Activated CD4-positive, alpha-beta T cell treated with anti-CD3 and anti-CD28 coated beads for 36 hours (primary cell): ENCODE measurements at regions of chr3 and their contacts with region 1.

Region 1: GRCh38 chr3:123986427-123986826 is 5.5 kb downstream of the ROPN1 start:
- DNase-seq: no peak
- ATAC-seq: no peak
- H3K4me3 Mint-ChIP-seq: no peak overlapping the region
- H3K27ac Mint-ChIP-seq: no peak overlapping the region
- H3K4me1 Mint-ChIP-seq: no peaks in the 10 kb centered on the region
- H3K27me3 Mint-ChIP-seq: peaks cover 48% of the 10 kb centered on the region

Region 2: DNA sequence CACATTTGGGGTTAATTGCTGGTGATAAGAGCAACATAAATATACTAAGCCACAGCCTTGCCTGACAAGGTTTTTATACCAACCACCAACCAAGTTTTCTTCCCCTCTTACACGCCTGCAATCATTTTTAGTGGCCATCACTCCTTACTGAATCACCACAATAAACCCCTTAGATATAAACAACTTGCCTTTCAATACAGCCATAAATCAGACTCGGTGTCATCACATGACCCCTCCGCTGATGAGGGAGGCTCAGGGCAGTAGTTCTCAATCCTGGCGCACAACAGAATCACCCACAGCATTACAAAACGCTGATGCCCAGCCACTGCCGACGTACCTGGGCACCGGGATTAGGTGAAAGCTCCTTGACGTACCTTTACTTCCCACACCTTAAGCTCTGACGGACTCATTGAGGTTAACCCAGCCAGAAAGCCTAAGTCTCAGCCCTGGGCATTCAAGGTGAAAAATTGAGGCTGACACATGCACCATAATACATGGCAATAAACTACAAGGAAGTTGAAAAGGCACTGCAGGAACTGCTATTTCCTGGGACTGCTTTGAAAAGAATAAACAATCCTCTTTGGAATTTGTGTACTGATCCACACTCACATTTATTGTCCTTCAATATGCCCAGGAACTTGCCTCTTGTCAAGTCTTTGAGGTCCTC is 554.6 kb before region 1 on chr3:
- CTCF ChIA-PET with region 1: no interaction called
- POLR2A ChIA-PET with region 1: no interaction called
- intact Hi-C with region 1: no loop called
- DNase-seq: no peak
- ATAC-seq: no peak
- H3K4me3 Mint-ChIP-seq: no peak overlapping the region
- H3K27ac Mint-ChIP-seq: no peak overlapping the region
- H3K4me1 Mint-ChIP-seq: no peaks in the 10 kb centered on the region
- H3K27me3 Mint-ChIP-seq: peaks cover 2% of the 10 kb centered on the region

Region 3: GRCh38 chr3:123642182-123642956 is 344.1 kb before region 1 on chr3:
- CTCF ChIA-PET with region 1: no interaction called
- POLR2A ChIA-PET with region 1: no interaction called
- intact Hi-C with region 1: loop called in 1 of 2 experiments (anchors 10 kb)
- DNase-seq: peak; percentile 84
- ATAC-seq: peak; percentile 97
- H3K4me3 Mint-ChIP-seq: no peak overlapping the region
- H3K27ac Mint-ChIP-seq: no peak overlapping the region
- H3K4me1 Mint-ChIP-seq: no peaks in the 10 kb centered on the region
- H3K27me3 Mint-ChIP-seq: no peaks in the 10 kb centered on the region